Right ventricle myocardium inferior (tissue), 1 donor: ENCODE measurements at regions of chr12 and their contacts with region 1.

Region 1: DNA sequence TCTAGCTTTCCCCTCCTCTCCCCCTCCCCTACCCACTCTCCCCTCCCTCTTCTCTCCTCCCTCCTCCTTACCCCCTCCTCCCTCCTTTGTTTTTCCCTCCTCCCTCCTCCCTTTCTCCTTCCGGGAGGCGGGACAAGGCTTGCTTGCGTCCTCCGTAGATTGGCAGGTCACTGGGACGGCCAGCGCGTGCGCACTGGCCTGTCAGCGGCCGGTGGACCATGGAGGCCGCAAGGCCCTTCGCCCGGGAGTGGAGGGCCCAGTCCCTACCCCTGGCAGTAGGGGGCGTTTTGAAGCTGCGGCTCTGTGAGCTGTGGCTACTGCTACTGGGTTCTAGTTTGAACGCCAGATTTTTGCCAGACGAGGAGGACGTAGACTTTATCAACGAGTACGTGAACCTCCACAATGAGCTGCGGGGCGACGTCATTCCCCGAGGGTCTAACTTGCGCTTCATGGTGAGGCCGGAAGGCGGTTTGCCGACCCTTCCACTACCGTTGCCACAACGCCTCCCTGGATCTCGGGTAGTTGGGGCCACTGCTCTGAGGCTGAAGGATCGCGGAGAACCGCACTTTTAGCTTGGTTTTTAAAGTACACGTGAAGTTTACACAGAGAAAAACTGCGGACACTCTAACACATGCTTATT is at the start of gene GLIPR1L2:
- DNase-seq: peak; percentile 98
- ATAC-seq: peak; percentile 100
- total RNA-seq, gene GLIPR1L2: 1.4 TPM

Region 2: GRCh38 chr12:74598819-74599218 is 792.2 kb before region 1 on chr12:
- intact Hi-C with region 1: no loop called
- DNase-seq: no peak
- ATAC-seq: no peak

Region 3: DNA sequence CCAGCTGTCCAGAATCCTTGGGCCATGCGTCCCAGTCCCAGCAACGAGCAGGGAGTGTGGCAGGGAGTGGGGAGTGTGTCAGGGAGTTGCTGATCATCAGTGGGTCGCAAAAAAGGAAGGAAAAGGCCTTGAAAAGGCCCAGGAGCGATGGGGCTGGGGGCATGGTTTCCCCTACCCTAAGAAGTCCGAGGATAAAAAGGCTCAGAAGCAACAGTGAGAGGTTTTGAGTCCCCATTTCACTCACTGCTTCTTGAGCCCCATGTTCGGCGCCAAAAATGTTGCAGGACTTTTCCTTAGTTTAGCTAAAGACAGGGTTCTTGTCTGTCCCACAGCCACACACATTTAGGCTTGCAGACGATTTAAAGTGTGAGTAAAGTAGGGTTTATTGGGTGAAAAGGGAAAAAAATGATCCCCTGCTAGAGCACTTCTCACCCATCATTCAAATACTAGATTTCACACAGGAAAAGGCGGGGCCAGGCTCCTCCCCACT is 370.9 kb before region 1 on chr12:
- intact Hi-C with region 1: no loop called
- DNase-seq: no peak
- ATAC-seq: no peak

Region 4: DNA sequence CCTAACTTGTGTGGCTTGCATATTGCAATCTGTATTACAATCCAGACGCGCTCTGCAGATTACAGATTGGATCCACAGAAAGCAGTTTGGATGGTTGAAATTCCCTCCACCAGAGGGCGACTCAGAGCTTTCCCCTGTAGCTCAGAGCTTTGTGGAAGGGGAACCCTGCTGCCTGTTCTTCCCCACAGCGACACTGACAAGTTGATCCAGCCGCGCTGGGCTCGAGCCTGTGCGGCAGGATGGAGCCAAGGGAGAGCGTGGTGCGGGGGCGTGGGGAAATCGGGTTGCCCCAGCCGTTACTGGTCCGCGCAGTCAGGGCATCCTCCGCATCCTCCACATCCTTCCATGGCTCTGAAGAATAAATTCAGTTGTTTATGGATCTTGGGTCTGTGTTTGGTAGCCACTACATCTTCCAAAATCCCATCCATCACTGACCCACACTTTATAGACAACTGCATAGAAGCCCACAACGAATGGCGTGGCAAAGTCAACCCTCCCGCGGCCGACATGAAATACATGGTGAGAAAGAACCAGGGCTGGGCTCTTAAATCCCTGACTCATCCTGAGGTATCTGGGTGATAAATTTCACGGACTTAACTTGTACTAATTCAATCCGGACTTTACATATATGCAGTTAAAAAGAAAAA is 56.5 kb before region 1 on chr12 and contains the start of gene GLIPR1L1:
- intact Hi-C with region 1: loop called (anchors 1 kb)
- DNase-seq: peak; percentile 82
- ATAC-seq: peak; percentile 85
- total RNA-seq, gene GLIPR1L1: not detected

Region 5: GRCh38 chr12:75511116-75512048 is 120.4 kb after region 1 on chr12 and contains the start of gene KRR1:
- intact Hi-C with region 1: loop called (anchors 5 kb)
- DNase-seq: peak; percentile 92
- ATAC-seq: peak; percentile 99
- total RNA-seq, gene KRR1: 31.1 TPM

Region 6: GRCh38 chr12:76074701-76075336 is 683.8 kb after region 1 on chr12:
- intact Hi-C with region 1: loop called (anchors 10 kb)
- DNase-seq: no peak
- ATAC-seq: no peak